Activated T-helper 1 cell treated with anti-CD3 and anti-CD28 coated beads, Interleukin-12 subunit alpha, Interleukin-12 subunit beta, Interleukin-2, Interleukin-4 antibody, amounts not matched to agents 30 ng/mL and 10 ng/mL and 1 ng/mL, durations not matched to agents 14 hours and 24 hours and 36 hours (primary cell): ENCODE measurements at regions of chr12 and their contacts with region 1.

Region 1: GRCh38 chr12:68001486-68002466 is 12.5 kb downstream of the IFNG-AS1 start:
- DNase-seq: no peak
- H3K4me3 Mint-ChIP-seq: no peak overlapping the region
- H3K27ac Mint-ChIP-seq: no peak overlapping the region
- H3K4me1 Mint-ChIP-seq: peaks cover 35% of the 10 kb centered on the region
- H3K27me3 Mint-ChIP-seq: no peaks in the 10 kb centered on the region

Region 2: DNA sequence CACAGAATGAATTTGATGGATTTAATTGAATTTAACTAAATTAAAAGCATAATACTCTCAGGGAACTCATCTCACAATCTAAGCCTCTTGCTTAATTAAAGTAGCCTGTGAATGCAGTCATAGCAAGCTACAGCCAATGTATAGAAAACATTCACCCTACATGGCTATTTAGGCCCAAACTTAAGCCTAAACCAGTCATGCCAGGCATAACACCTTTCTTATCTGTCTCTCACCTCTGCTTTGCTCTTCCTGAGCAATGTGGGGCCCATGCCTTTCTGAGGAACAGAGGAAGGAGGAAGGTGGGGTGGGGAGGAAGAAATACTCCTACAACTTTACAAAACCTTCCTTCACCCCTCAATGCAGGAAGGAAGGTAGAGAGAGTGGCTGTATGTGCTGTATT is 16.5 kb after region 1 on chr12:
- intact Hi-C with region 1: loop called (anchors 2 kb)
- DNase-seq: no peak
- H3K4me3 Mint-ChIP-seq: peak overlapping the region; percentile 11
- H3K27ac Mint-ChIP-seq: peak overlapping the region; percentile 59
- H3K4me1 Mint-ChIP-seq: peaks cover 38% of the 10 kb centered on the region
- H3K27me3 Mint-ChIP-seq: no peaks in the 10 kb centered on the region

Region 3: DNA sequence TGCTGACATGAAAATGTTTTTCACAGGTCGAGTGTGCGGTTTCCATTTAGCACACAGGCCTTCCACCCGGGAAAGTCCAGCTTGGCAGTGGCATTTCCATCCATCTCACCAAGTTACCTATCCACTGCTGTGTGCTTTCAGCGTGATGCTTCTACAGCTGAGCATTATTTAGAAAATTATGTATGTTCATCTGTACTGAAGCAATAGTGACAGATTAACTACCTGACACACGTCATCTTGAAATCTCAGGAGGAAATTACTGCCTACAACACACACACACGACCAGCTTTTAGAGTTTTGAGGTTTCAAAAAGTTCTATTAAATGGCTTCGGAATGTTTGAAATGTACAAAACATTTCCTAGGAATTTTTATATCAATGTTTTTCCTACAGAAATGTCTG is 26.9 kb after region 1 on chr12:
- intact Hi-C with region 1: no loop called
- DNase-seq: no peak
- H3K4me3 Mint-ChIP-seq: no peak overlapping the region
- H3K27ac Mint-ChIP-seq: no peak overlapping the region
- H3K4me1 Mint-ChIP-seq: peaks cover 49% of the 10 kb centered on the region
- H3K27me3 Mint-ChIP-seq: no peaks in the 10 kb centered on the region

Region 4: DNA sequence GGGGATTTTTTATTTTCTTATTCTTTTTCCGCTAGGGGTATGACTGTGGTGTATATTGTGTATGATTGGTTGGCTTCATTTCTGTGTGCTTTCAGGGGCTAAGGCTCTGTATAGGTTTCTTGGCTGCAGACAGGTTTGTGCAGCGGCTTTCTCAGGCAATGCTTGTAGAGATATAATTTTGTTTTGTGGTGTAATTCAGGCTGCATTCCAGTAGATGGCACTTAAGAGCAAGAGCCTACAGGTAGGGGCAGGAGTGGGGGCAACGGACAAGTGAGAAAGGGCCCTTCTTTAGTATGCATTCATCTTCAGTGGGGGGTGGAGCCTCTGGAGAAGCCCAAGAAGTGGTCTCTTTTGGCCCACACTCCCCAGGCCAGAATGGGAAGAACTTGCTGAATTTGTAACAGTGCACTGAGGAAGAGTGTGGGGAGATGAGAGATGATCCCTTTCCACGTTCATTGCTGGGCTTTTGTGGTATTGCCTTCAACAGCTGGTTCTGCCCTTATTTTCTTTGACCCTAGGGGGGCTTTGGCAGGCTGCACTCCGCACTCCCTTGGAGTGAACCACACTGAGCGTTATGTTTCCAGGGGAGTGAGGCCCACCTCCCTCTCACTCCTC is 66.1 kb after region 1 on chr12:
- intact Hi-C with region 1: no loop called
- DNase-seq: no peak
- H3K4me3 Mint-ChIP-seq: no peak overlapping the region
- H3K27ac Mint-ChIP-seq: no peak overlapping the region
- H3K4me1 Mint-ChIP-seq: peaks cover 40% of the 10 kb centered on the region
- H3K27me3 Mint-ChIP-seq: no peaks in the 10 kb centered on the region

Region 5: GRCh38 chr12:68158432-68158831 is 156.7 kb after region 1 on chr12:
- intact Hi-C with region 1: loop called (anchors 1 kb)
- DNase-seq: no peak
- H3K4me3 Mint-ChIP-seq: peak overlapping the region; percentile 91
- H3K27ac Mint-ChIP-seq: peak overlapping the region; percentile 87
- H3K4me1 Mint-ChIP-seq: peaks cover 65% of the 10 kb centered on the region
- H3K27me3 Mint-ChIP-seq: no peaks in the 10 kb centered on the region

Region 6: GRCh38 chr12:68317047-68317667 is 315.4 kb after region 1 on chr12:
- intact Hi-C with region 1: loop called (anchors 1 kb)
- DNase-seq: no peak
- H3K4me3 Mint-ChIP-seq: no peak overlapping the region
- H3K27ac Mint-ChIP-seq: no peak overlapping the region
- H3K4me1 Mint-ChIP-seq: peaks cover 17% of the 10 kb centered on the region
- H3K27me3 Mint-ChIP-seq: no peaks in the 10 kb centered on the region